ENCODE measurements at regions of chr16 and their contacts with region 1.

Region 1: DNA sequence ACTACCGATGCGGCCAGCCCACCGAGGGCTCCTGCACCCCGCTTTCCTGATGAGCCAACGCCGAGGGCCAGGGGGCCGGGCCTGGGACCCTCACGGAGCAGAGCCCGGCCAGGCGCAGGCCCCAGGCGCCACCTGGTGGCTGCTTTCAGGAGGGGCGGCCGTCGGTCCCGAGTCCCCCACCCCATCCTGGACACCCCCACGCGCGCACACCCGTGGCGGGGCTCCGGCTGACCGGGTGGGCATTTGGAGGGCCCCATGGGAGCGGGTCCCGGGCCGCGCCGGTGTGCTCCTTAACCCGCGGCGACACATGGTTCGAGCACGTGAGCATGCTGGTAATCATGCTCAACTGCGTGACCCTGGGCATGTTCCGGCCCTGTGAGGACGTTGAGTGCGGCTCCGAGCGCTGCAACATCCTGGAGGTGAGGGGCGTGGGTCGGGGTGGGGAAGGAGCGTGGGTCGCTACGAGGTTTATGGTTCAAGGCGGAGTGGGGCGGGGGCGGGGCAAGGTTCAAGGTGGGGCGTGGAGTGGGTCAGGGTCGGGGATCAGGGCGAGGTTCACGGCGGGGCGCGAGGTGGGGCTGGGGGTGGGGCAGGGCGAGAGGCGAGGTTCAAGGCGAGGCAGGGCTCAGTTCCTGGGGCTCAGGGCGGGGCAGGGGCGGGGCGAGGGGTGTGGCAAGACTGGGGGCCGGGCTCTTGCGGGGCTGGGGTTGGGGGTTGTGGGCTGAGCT is 30.2 kb downstream of the TPSG1 start:
- DNase-seq: no peak
- H3K4me3 ChIP-seq: no peak overlapping the region
- H3K27ac ChIP-seq: no peak overlapping the region
- H3K4me1 ChIP-seq: no peaks in the 10 kb centered on the region
- H3K27me3 ChIP-seq: no peaks in the 10 kb centered on the region
- CTCF ChIP-seq: peak; percentile 91 to 97 (median 93)

Region 2: GRCh38 chr16:1105888-1106620 is 88.8 kb before region 1 on chr16:
- intact Hi-C with region 1: loop called (anchors 1 kb)
- DNase-seq: peak in 1 of 2 donors; percentile 78
- H3K4me3 ChIP-seq: no peak overlapping the region
- H3K27ac ChIP-seq: no peak overlapping the region
- H3K4me1 ChIP-seq: peaks cover 0 to 7% of the 10 kb centered on the region in 2 donors
- H3K27me3 ChIP-seq: peaks cover 14% of the 10 kb centered on the region
- CTCF ChIP-seq: peak; percentile 87 to 93 (median 90)

Region 3: DNA sequence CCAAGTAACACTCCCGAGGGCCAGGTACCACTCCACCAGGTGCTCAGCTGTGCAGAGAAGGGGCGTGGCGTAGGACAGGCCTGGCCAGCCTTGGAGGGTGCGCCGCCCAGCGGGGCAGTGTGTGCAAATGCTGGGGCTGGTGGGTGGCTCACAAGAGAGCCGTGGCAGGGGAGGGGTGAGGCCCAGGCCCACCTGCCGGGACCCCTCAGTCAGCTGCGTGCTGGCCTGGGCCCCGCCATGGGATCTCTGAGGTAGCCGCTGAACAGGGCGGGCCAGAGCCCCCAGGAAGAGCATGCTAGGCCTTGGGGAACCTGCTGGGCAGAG is 21.4 kb after region 1 on chr16:
- intact Hi-C with region 1: no loop called
- DNase-seq: no peak
- H3K4me3 ChIP-seq: no peak overlapping the region
- H3K27ac ChIP-seq: no peak overlapping the region
- H3K4me1 ChIP-seq: no peaks in the 10 kb centered on the region
- H3K27me3 ChIP-seq: no peaks in the 10 kb centered on the region
- CTCF ChIP-seq: no peak

Region 4: GRCh38 chr16:1323296-1324195 is 128.7 kb after region 1 on chr16:
- intact Hi-C with region 1: no loop called
- DNase-seq: no peak
- H3K4me3 ChIP-seq: no peak overlapping the region
- H3K27ac ChIP-seq: no peak overlapping the region
- H3K4me1 ChIP-seq: no peaks in the 10 kb centered on the region
- H3K27me3 ChIP-seq: no peaks in the 10 kb centered on the region
- CTCF ChIP-seq: no peak

Region 5: DNA sequence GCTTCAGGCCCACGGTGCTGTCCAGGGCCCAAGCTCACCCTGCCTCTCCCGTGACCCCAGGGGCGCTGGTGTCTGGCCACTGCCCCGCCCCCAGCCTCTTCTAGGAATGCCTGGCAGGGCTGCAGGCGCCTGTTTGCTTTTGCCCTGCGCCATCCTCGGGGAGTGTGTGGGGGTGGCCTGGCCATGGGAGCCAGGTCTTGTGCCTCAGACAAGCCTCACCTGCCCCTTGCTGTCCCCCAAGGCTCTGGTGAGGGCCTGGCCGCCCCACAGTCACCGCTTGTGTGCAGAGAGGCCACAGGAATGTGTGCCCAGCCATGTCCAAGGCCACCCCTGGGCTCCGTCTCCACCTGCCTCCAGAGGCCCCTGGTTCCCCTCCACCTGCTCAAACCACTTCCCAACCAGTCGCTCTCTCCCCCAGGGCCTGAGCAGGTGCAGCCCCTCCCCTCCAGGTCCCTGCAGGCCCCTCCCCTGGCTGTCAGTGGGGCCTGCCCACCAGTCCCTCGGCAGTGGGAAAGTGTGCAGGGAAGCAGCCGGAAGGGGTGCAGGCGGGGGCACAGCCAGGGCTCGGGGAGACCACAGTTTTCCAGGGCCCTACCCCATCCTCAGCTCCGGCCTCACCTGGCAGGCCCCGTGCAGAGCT is 599.5 kb after region 1 on chr16:
- intact Hi-C with region 1: no loop called
- DNase-seq: no peak
- H3K4me3 ChIP-seq: no peak overlapping the region
- H3K27ac ChIP-seq: no peak overlapping the region
- H3K4me1 ChIP-seq: no peaks in the 10 kb centered on the region
- H3K27me3 ChIP-seq: no peaks in the 10 kb centered on the region
- CTCF ChIP-seq: no peak

Measured in ascending aorta (tissue), 2 donors.